A549 (cell line): ENCODE measurements at regions of chr11 and their contacts with region 1.

Region 1: GRCh38 chr11:63478896-63479295 is 12.1 kb downstream of the PLAAT5 start:
- DNase-seq: peak; percentile 71 to 85
- ATAC-seq: peak; percentile 95
- H3K4me3 ChIP-seq: no peak overlapping the region
- H3K27ac ChIP-seq: peak overlapping the region; percentile 1 to 53; a peak in 2 of 6 replicates
- H3K4me1 ChIP-seq: no peaks in the 10 kb centered on the region; the same call in 2 of the 3 replicates
- CTCF ChIP-seq: peak; percentile 96
- EP300 ChIP-seq: no peak
- POLR2A ChIP-seq: no peak
- RAD21 ChIP-seq: peak; percentile 98 to 100

Region 2: DNA sequence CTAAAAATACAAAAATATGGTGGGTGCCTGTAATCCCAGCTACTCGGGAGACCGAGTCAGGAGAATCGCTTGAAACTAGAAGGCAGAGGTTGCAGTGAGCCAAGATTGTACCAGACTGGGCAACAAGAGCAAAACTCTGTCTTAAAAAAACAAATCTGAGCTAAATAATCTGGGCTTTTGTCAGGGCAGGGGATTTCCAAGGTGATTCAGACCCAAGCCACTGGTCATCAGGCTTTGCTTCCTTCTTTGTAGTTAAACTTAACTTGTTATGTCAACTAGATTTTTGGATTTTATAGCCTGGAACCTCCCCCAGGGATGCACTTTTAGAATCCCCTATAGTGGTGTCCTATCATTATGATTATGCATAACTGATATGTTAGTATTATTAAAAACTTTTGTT is 436.3 kb before region 1 on chr11:
- CTCF ChIA-PET with region 1: no interaction called
- POLR2A ChIA-PET with region 1: no interaction called
- DNase-seq: no peak
- ATAC-seq: no peak
- H3K4me3 ChIP-seq: no peak overlapping the region
- H3K27ac ChIP-seq: no peak overlapping the region
- H3K4me1 ChIP-seq: no peaks in the 10 kb centered on the region
- CTCF ChIP-seq: no peak
- EP300 ChIP-seq: no peak
- POLR2A ChIP-seq: no peak
- RAD21 ChIP-seq: no peak

Region 3: DNA sequence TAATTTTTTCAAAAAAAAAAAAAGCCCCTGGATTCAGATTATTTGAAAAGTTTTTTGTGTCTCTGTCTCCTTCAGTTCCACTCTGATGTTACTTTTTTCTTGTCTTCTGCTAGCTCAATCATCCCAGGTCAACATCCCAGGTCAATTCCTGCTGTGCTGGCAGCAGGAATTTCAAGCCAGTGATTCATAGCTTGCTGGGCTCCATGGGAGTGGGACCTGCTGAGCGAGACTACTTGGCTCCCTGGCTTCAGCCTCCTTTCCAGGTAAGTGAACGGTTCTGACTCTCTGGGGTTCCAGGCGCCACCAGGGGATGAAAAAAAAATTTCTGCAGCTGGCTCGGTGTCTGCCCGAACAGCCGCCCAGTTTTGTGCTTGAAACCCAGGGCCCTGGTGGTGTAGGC is 19.3 kb before region 1 on chr11:
- CTCF ChIA-PET with region 1: interaction called, 24 read pairs
- POLR2A ChIA-PET with region 1: no interaction called
- DNase-seq: no peak
- ATAC-seq: no peak
- H3K4me3 ChIP-seq: no peak overlapping the region
- H3K27ac ChIP-seq: no peak overlapping the region
- H3K4me1 ChIP-seq: no peaks in the 10 kb centered on the region
- CTCF ChIP-seq: no peak
- EP300 ChIP-seq: no peak
- POLR2A ChIP-seq: no peak
- RAD21 ChIP-seq: no peak

Region 4: DNA sequence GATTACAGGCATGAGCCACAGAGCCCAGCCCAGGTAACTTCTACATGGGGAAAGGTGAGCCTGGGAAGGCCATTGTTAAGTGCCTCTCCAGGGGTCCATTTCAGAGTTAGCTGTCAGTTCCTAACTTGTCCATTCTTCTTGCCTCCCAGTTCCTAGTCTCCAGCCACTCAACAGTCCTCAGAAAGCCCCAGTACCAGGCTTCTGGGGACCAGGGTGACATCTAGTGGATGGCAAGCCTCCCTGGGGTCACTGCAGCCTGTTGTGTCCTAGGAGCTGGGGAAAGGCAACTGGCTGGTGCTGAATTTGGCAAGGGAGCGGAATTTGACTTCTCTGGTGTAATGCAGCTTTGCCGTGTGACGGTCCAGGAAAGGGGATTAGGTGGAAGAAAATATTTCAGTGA is 29.1 kb after region 1 on chr11:
- CTCF ChIA-PET with region 1: interaction called, 29 read pairs
- POLR2A ChIA-PET with region 1: no interaction called
- DNase-seq: peak; percentile 54 to 60
- ATAC-seq: peak; percentile 82 to 89
- H3K4me3 ChIP-seq: no peak overlapping the region
- H3K27ac ChIP-seq: no peak overlapping the region
- H3K4me1 ChIP-seq: peaks cover 14% of the 10 kb centered on the region
- CTCF ChIP-seq: peak; percentile 37; the same call in 2 of the 3 replicates
- EP300 ChIP-seq: no peak
- POLR2A ChIP-seq: no peak
- RAD21 ChIP-seq: peak; percentile 44 to 50

Region 5: DNA sequence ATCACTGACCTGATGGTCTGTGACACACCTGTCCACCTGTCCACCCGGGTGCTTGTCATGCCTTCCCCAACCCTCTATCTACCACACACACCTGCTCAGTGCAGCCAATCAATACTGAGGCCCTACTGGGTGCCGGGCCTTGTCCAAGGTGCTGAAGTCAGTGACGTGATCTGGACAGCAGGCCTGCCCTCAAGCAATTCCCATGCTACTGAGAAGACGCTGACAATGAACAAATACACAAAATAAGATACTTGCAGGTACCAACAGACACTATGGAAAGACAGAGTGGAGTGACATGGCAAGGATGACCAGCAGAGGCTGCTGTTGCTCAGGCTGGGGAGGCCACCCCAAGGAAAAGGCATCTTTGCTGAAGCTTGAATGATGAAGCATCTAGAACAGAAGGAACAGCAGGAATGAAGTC is 114.1 kb after region 1 on chr11:
- CTCF ChIA-PET with region 1: interaction called, 39 read pairs
- POLR2A ChIA-PET with region 1: no interaction called
- DNase-seq: peak; percentile 45 to 62
- ATAC-seq: peak; percentile 72 to 90; a peak in 5 of 6 replicates
- H3K4me3 ChIP-seq: no peak overlapping the region
- H3K27ac ChIP-seq: no peak overlapping the region
- H3K4me1 ChIP-seq: peaks cover 7% of the 10 kb centered on the region; the same call in 1 of the 3 replicates
- CTCF ChIP-seq: peak; percentile 62
- EP300 ChIP-seq: no peak
- POLR2A ChIP-seq: no peak
- RAD21 ChIP-seq: peak; percentile 68 to 88; a peak in 4 of 5 replicates

Region 6: GRCh38 chr11:63629426-63629825 is 150.5 kb after region 1 on chr11:
- CTCF ChIA-PET with region 1: interaction called, 128 read pairs
- POLR2A ChIA-PET with region 1: no interaction called
- DNase-seq: no peak
- ATAC-seq: no peak
- H3K4me3 ChIP-seq: no peak overlapping the region
- H3K27ac ChIP-seq: no peak overlapping the region
- H3K4me1 ChIP-seq: peaks cover 27% of the 10 kb centered on the region
- CTCF ChIP-seq: no peak
- EP300 ChIP-seq: no peak
- POLR2A ChIP-seq: no peak
- RAD21 ChIP-seq: no peak

Region 7: DNA sequence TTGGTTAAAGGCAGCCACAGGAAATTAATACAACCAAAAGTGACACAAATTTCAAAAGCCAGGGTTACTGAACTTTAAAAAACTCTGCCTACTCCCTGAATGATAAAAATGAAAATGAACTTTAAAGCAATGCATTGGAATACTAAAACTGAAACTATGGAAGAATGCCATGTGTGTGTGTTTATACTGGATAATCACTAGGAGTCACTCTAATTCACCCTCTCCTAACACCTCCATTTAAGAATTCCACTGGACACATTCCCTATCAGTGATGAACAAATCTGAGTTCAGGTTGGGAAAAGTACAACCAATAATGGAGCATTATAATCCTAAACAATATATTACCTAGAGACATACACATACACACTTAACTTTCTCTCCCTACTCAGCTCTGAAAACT is 162.8 kb after region 1 on chr11:
- CTCF ChIA-PET with region 1: interaction called, 128 read pairs
- POLR2A ChIA-PET with region 1: no interaction called
- DNase-seq: no peak
- ATAC-seq: no peak
- H3K4me3 ChIP-seq: no peak overlapping the region
- H3K27ac ChIP-seq: no peak overlapping the region
- H3K4me1 ChIP-seq: no peaks in the 10 kb centered on the region
- CTCF ChIP-seq: peak; percentile 24; the same call in 1 of the 3 replicates
- EP300 ChIP-seq: no peak
- POLR2A ChIP-seq: no peak
- RAD21 ChIP-seq: 0 out of 5 replicates have a peak, but pooled peaks of 1 of the 2 experiments have one; percentile 21